ENCODE measurements at regions of chr12 and their contacts with region 1.

Region 1: DNA sequence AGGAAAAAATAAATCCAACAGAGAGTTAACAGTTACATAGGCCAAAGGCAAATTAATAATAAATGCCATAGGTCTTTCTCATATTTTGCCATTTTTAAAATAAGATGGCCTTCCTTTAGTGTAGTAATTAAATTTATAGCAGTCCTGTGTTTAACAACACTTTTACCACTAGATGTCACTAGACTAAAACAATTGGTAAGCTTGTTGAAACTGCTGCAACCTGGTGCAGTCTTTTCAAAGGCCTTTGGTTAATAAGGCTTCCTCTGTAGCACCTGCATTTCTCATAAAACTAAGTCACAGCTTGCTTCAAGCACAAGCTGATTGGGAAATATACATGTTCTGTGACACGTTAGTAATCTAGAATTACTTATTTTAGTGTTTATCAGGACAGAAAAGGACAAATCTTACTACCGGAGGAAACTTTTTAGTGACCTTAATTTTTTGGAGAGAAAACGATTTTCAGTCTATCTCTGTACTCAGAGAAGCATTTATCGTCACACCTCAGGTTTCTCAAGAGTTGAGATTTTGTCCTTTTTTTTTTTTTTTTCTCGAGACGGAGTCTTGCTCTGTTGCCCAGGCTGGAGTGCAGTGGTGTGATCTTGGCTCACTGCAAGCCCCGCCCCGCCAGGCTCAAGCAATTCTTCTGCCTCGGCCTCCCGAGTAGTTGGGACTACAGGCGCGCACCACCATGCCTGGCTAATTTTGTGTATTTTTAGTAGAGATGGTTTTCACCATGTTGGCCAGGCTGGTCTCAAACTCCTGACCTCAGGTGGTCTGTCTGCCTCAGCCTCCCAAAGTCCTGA is 20.0 kb downstream of the BORCS5 start:
- DNase-seq: peak in 7 of 9 donors; percentile 58 to 84 (median 72)
- ATAC-seq: peak; percentile 63
- H3K4me3 ChIP-seq: no peak overlapping the region
- H3K4me3 Mint-ChIP-seq: no peak overlapping the region
- H3K27ac ChIP-seq: no peak overlapping the region
- H3K27ac Mint-ChIP-seq: peak overlapping the region in 6 of 9 donors; percentile 46 to 86 (median 66)
- H3K4me1 ChIP-seq: peaks cover 14 to 42% of the 10 kb centered on the region in 2 donors
- H3K4me1 Mint-ChIP-seq: peaks cover 7 to 50% (median 44%) of the 10 kb centered on the region in 7 donors
- H3K27me3 ChIP-seq: no peaks in the 10 kb centered on the region
- H3K27me3 Mint-ChIP-seq: no peaks in the 10 kb centered on the region

Region 2: GRCh38 chr12:12126551-12126950 is 250.3 kb before region 1 on chr12:
- CTCF ChIA-PET with region 1: no interaction called
- POLR2A ChIA-PET with region 1: no interaction called
- intact Hi-C with region 1: no loop called
- DNase-seq: no peak
- ATAC-seq: no peak
- H3K4me3 ChIP-seq: no peak overlapping the region
- H3K4me3 Mint-ChIP-seq: no peak overlapping the region
- H3K27ac ChIP-seq: no peak overlapping the region
- H3K27ac Mint-ChIP-seq: no peak overlapping the region
- H3K4me1 ChIP-seq: no peaks in the 10 kb centered on the region
- H3K4me1 Mint-ChIP-seq: peaks cover 0 to 11% (median 4%) of the 10 kb centered on the region in 7 donors
- H3K27me3 ChIP-seq: no peaks in the 10 kb centered on the region
- H3K27me3 Mint-ChIP-seq: peaks cover 0 to 2% (median 0%) of the 10 kb centered on the region in 5 donors

Region 3: GRCh38 chr12:12442548-12443071 is 65.8 kb after region 1 on chr12:
- CTCF ChIA-PET with region 1: no interaction called
- POLR2A ChIA-PET with region 1: interaction called, 8 read pairs
- intact Hi-C with region 1: loop called in 1 of 2 experiments (anchors 2 kb)
- DNase-seq: peak in 1 of 9 donors; percentile 32
- ATAC-seq: no peak
- H3K4me3 ChIP-seq: no peak overlapping the region
- H3K4me3 Mint-ChIP-seq: peak overlapping the region in 9 of 10 donors; percentile 9 to 78 (median 56)
- H3K27ac ChIP-seq: peak overlapping the region; percentile 61
- H3K27ac Mint-ChIP-seq: peak overlapping the region; percentile 92 to 99 (median 97)
- H3K4me1 ChIP-seq: peaks cover 52 to 54% of the 10 kb centered on the region in 2 donors
- H3K4me1 Mint-ChIP-seq: peaks cover 39 to 72% (median 66%) of the 10 kb centered on the region in 7 donors
- H3K27me3 ChIP-seq: no peaks in the 10 kb centered on the region
- H3K27me3 Mint-ChIP-seq: no peaks in the 10 kb centered on the region

Region 4: GRCh38 chr12:12562585-12563261 is 185.9 kb after region 1 on chr12 and contains the start of gene DUSP16:
- CTCF ChIA-PET with region 1: interaction called, 13 read pairs
- POLR2A ChIA-PET with region 1: interaction called, 27 read pairs
- intact Hi-C with region 1: loop called (anchors 1 kb)
- DNase-seq: peak; percentile 75 to 92 (median 88)
- ATAC-seq: peak; percentile 85
- H3K4me3 ChIP-seq: peak within 1 kb of the TSS; percentile 62
- H3K4me3 Mint-ChIP-seq: peak within 1 kb of the TSS; percentile 87 to 97 (median 92)
- H3K27ac ChIP-seq: peak within 1 kb of the TSS; percentile 92
- H3K27ac Mint-ChIP-seq: peak within 1 kb of the TSS; percentile 94 to 100 (median 99)
- H3K4me1 ChIP-seq: peaks cover 14 to 16% of the 10 kb centered on the region in 2 donors
- H3K4me1 Mint-ChIP-seq: peaks cover 14 to 50% (median 37%) of the 10 kb centered on the region in 7 donors
- H3K27me3 ChIP-seq: no peaks in the 10 kb centered on the region
- H3K27me3 Mint-ChIP-seq: no peaks in the 10 kb centered on the region
- total RNA-seq, gene DUSP16: 26.8 to 42.8 (median 38.9) TPM

Region 5: DNA sequence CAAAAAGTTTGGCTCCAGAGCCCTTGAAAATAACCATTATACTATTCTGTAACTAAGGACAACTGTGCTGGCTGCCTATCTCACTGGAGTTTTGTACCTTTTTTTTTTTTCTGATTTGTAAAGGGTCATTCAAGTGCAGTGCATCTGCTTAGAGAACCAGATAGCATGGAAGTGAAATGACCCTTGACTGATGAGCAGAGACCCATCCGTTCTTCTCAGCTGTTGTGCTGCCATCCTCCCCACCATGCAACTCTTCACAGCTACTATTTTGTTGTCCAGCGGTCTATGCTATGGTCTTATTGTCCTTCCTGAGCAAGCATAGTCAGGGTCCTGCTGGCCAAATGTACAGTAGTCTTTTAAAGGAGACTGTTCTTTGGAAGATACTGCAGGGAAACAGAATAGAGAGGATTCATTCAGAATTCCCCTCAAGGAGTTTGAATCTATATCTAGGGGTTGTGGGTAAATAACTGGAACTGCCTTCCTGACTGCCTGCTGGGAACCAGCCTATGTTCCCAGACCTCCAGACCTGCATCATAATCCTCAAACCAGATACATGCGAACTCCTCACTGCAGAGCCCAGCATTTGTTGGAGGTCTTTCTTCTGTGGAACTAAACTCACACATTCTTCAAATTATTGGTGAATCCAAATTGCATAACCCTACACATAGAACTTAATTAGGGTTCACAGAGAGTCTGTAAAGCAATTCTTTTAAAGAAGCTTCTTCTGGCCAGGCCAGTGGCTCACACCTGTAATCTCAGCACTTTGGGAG is 278.0 kb after region 1 on chr12:
- CTCF ChIA-PET with region 1: interaction called, 23 read pairs
- POLR2A ChIA-PET with region 1: interaction called, 9 read pairs
- intact Hi-C with region 1: loop called (anchors 1 kb)
- DNase-seq: no peak
- ATAC-seq: no peak
- H3K4me3 ChIP-seq: no peak overlapping the region
- H3K4me3 Mint-ChIP-seq: no peak overlapping the region
- H3K27ac ChIP-seq: no peak overlapping the region
- H3K27ac Mint-ChIP-seq: peak overlapping the region in 2 of 9 donors; percentile 10 to 53
- H3K4me1 ChIP-seq: no peaks in the 10 kb centered on the region
- H3K4me1 Mint-ChIP-seq: peaks cover 0 to 19% (median 13%) of the 10 kb centered on the region in 7 donors
- H3K27me3 ChIP-seq: no peaks in the 10 kb centered on the region
- H3K27me3 Mint-ChIP-seq: no peaks in the 10 kb centered on the region

Region 6: DNA sequence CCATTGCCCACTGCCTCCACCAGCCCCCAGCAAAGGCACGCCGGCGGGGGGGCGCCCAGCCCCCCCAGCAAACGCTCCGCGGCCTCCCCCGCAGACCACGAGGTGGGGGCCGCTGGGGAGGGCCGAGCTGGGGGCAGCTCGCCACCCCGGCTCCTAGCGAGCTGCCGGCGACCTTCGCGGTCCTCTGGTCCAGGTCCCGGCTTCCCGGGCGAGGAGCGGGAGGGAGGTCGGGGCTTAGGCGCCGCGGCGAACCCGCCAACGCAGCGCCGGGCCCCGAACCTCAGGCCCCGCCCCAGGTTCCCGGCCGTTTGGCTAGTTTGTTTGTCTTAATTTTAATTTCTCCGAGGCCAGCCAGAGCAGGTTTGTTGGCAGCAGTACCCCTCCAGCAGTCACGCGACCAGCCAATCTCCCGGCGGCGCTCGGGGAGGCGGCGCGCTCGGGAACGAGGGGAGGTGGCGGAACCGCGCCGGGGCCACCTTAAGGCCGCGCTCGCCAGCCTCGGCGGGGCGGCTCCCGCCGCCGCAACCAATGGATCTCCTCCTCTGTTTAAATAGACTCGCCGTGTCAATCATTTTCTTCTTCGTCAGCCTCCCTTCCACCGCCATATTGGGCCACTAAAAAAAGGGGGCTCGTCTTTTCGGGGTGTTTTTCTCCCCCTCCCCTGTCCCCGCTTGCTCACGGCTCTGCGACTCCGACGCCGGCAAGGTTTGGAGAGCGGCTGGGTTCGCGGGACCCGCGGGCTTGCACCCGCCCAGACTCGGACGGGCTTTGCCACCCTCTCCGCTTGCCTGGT is 340.1 kb after region 1 on chr12 and contains the start of gene CDKN1B:
- CTCF ChIA-PET with region 1: interaction called, 5 read pairs
- POLR2A ChIA-PET with region 1: interaction called, 10 read pairs
- intact Hi-C with region 1: loop called in 1 of 2 experiments (anchors 1 kb)
- DNase-seq: peak; percentile 68 to 91 (median 87)
- ATAC-seq: peak; percentile 77
- H3K4me3 ChIP-seq: peak within 1 kb of the TSS; percentile 94
- H3K4me3 Mint-ChIP-seq: peak within 1 kb of the TSS; percentile 87 to 100 (median 98)
- H3K27ac ChIP-seq: peak within 1 kb of the TSS; percentile 99
- H3K27ac Mint-ChIP-seq: peak within 1 kb of the TSS; percentile 97 to 99 (median 99)
- H3K4me1 ChIP-seq: peaks cover 24 to 39% of the 10 kb centered on the region in 2 donors
- H3K4me1 Mint-ChIP-seq: peaks cover 43 to 66% (median 55%) of the 10 kb centered on the region in 7 donors
- H3K27me3 ChIP-seq: no peaks in the 10 kb centered on the region
- H3K27me3 Mint-ChIP-seq: no peaks in the 10 kb centered on the region
- total RNA-seq, gene CDKN1B: 105 to 205 (median 191) TPM

Region 7: DNA sequence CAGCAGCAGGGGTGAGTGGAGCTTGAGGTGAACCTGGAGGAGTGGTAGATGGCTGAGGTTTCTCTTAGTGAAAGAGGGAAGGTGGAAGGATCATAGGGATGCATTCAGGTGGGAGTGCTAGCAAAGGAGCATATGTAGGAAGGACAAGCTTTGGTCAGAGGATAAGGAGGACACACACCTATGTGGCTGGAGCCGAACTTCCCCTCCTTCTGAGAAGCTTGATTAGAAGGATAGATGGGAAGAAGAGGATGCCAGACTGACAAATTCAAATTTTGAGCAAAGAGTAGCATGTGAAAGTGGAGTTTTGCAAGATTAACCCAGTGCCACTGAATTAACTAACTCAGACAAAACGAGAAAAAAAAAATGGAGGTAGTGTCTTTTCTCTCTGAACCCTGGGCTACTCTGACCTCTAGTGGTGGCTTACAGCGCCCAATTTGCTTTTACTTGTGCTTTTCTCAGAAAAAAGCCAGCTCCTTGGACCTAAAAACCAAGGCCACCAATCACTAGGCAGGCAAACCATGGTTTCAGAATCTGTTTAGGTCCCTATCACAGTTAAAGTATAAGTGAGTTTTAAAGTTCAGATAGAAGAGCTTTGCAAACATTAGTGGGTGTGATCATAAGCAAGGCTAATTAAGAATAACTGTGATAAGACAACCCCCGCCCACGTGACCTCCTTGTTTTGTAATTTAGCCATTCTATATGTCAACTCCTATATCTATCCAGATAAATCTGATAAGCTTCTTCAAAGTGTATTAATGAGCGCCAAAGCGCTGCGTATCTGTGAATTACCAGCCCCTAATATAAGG is 835.2 kb after region 1 on chr12:
- CTCF ChIA-PET with region 1: no interaction called
- POLR2A ChIA-PET with region 1: no interaction called
- intact Hi-C with region 1: loop called in 1 of 2 experiments (anchors 1 kb)
- DNase-seq: peak; percentile 29 to 81 (median 73)
- ATAC-seq: peak; percentile 87
- H3K4me3 ChIP-seq: no peak overlapping the region
- H3K4me3 Mint-ChIP-seq: peak overlapping the region in 1 of 10 donors; percentile 55
- H3K27ac ChIP-seq: no peak overlapping the region
- H3K27ac Mint-ChIP-seq: peak overlapping the region in 3 of 9 donors; percentile 19 to 76 (median 70)
- H3K4me1 ChIP-seq: no peaks in the 10 kb centered on the region
- H3K4me1 Mint-ChIP-seq: peaks cover 5 to 29% (median 7%) of the 10 kb centered on the region in 7 donors
- H3K27me3 ChIP-seq: no peaks in the 10 kb centered on the region
- H3K27me3 Mint-ChIP-seq: peaks cover 0 to 13% (median 0%) of the 10 kb centered on the region in 5 donors

Measured in naive thymus-derived CD4-positive, alpha-beta T cell (primary cell).